ENCODE measurements at regions of chr12 and their contacts with region 1.

Region 1: GRCh38 chr12:130747867-130748740 is 32.0 kb upstream of the RIMBP2 start:
- DNase-seq: peak; percentile 85 to 94 (median 90)
- ATAC-seq: peak; percentile 94
- H3K4me3 ChIP-seq: no peak overlapping the region
- H3K27ac ChIP-seq: no peak overlapping the region
- H3K4me1 ChIP-seq: no peaks in the 10 kb centered on the region
- H3K27me3 ChIP-seq: no peaks in the 10 kb centered on the region

Region 2: GRCh38 chr12:130401703-130402102 is 346.4 kb before region 1 on chr12:
- intact Hi-C with region 1: loop called (anchors 2 to 10 kb)
- DNase-seq: no peak
- ATAC-seq: peak; percentile 22 to 40
- H3K4me3 ChIP-seq: no peak overlapping the region
- H3K27ac ChIP-seq: no peak overlapping the region
- H3K4me1 ChIP-seq: no peaks in the 10 kb centered on the region
- H3K27me3 ChIP-seq: no peaks in the 10 kb centered on the region